PC-9 (cell line): ENCODE measurements at regions of chr1 and their contacts with region 1.

Region 1: DNA sequence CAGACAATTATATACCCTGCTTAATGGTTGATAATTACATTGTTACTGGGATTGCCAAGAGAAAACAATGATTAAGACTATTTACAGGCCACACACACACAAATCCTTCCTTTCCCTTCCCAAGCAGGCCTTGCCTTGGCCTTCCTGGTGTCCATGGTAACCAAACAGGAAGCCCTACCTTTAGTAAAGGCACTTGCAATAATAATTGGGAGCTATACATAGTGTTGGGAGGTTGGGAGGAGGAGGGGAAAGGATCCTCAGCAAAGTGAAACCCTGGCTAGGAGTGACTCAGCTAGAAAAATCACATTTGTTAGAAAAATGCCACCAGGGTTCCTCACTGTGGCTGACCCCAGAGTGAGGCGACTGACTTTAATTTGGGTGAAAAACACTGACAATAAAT is 122.3 kb upstream of the ADAR start:
- DNase-seq: peak; percentile 52 to 85
- H3K4me3 ChIP-seq: no peak overlapping the region
- H3K27ac ChIP-seq: peak overlapping the region; percentile 70
- H3K4me1 ChIP-seq: peaks cover 17% of the 10 kb centered on the region
- H3K27me3 ChIP-seq: no peaks in the 10 kb centered on the region
- CTCF ChIP-seq: no peak

Region 2: DNA sequence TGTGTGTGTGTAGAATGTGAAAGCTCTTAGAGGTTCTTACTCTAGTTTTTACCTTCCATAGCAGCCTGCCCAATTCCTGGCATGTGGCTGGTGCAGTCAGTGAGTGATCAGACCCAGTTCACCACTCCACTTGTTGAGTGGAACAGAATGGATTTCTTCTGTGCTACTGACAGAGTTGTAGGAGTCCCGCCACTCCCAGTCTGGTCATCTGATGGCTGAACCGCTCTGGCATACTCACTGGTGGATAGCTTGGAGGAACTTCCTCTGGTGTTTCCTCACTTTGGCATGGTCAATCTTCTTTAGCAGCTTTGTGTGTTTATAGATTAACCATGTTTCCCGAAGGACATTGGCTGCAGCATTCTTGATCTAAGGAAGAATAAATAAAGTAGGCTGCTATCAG is 15.6 kb before region 1 on chr1:
- CTCF ChIA-PET with region 1: no interaction called
- POLR2A ChIA-PET with region 1: no interaction called
- intact Hi-C with region 1: no loop called
- DNase-seq: peak; percentile 24 to 78
- H3K4me3 ChIP-seq: no peak overlapping the region
- H3K27ac ChIP-seq: no peak overlapping the region
- H3K4me1 ChIP-seq: no peaks in the 10 kb centered on the region
- H3K27me3 ChIP-seq: peaks cover 20% of the 10 kb centered on the region
- CTCF ChIP-seq: no peak

Region 3: GRCh38 chr1:154896771-154897391 is 166.6 kb after region 1 on chr1:
- CTCF ChIA-PET with region 1: interaction called, 17 read pairs
- POLR2A ChIA-PET with region 1: no interaction called
- intact Hi-C with region 1: no loop called
- DNase-seq: no peak
- H3K4me3 ChIP-seq: no peak overlapping the region
- H3K27ac ChIP-seq: no peak overlapping the region
- H3K4me1 ChIP-seq: no peaks in the 10 kb centered on the region
- H3K27me3 ChIP-seq: peaks cover 40% of the 10 kb centered on the region; the same call in 1 of the 2 replicates
- CTCF ChIP-seq: no peak